Panc1 (cell line): ENCODE measurements at regions of chr12 and their contacts with region 1.

Region 1: DNA sequence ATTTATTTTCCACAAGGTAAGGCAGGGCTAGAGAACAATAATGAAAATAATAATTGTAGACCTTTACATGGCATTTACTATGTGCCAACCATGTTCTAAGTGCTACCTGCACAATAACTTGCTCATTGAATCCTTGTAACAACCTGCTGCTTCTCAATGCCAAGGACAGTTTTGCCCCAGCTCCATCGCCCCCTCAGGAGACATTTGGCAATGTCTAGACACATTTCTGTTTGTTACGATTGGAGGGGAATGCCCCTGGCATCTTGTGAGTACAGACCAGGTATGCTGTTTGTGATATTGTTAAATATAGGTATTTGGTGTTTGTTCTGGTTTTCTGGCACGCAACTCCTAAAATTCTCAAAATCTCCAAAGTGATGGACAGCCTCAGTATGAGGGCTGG is 8.1 kb upstream of the ATXN2 start:
- DNase-seq: no peak
- ATAC-seq: peak; percentile 46; the same call in 1 of the 2 replicates
- H3K4me3 ChIP-seq: no peak overlapping the region
- H3K27ac ChIP-seq: no peak overlapping the region
- H3K4me1 ChIP-seq: no peaks in the 10 kb centered on the region
- H3K27me3 ChIP-seq: no peaks in the 10 kb centered on the region
- CTCF ChIP-seq: no peak

Region 2: DNA sequence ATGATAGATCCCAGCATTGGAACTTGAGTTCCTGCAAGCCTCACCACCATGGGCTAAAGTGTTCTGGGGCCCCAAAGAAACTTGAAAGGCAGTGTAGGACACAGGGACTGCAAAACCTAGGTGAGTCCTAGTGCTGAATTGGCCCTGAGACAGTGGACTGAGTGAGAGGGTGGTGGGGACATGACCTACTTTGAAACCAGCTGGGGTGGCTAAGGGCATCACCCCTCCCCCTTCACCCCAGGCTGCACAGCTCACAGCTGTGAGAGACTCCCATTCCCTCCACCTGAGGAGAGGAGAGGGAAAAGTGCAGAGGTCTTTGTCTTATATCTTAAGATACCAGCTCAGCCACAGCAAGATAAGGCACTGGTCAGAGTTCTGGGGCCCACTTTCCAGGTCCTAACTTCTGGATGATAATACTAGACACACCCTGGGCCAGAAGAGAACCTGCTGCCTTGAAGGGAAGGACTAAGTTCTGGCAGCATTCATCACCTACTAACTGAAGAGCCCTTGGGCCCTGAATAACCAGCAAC is 297.3 kb after region 1 on chr12:
- CTCF ChIA-PET with region 1: no interaction called
- POLR2A ChIA-PET with region 1: interaction called, 10 read pairs
- in situ Hi-C with region 1: no loop called
- intact Hi-C with region 1: no loop called
- DNase-seq: no peak
- ATAC-seq: no peak
- H3K4me3 ChIP-seq: no peak overlapping the region
- H3K27ac ChIP-seq: no peak overlapping the region
- H3K4me1 ChIP-seq: no peaks in the 10 kb centered on the region
- H3K27me3 ChIP-seq: no peaks in the 10 kb centered on the region
- CTCF ChIP-seq: no peak